ENCODE measurements at regions of chr1 and their contacts with region 1.

Region 1: DNA sequence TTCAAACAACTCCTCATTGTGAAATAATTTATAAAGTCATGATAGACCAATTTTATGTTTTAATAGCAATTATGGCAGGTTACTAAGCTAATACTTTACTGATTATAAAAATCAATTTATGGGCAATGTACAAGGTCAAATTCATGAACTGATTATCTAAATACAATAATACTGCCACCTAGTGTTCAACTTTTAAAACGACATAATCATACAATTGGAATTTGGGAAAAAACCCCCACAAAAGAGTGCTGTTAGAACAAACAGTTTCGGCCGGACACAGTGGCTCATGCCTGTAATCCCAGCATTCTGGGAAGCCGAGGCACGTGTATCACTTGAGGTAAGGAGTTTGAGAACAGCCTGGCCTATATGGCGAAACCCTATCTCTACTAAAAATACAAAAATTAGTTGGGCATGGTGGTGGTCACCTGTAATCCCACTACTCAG is 14.0 kb downstream of the GTF2B start:
- DNase-seq: peak in 1 of 2 experiments; percentile 5
- ATAC-seq: peak in 1 of 2 experiments; percentile 25; a peak in 1 of 6 replicates
- H3K4me3 ChIP-seq: no peak overlapping the region
- H3K27ac ChIP-seq: no peak overlapping the region
- H3K4me1 ChIP-seq: 0 out of 3 replicates have a peak, but pooled peaks cover 3% of the 10 kb centered on the region
- CTCF ChIP-seq: peak; percentile 55
- EP300 ChIP-seq: no peak
- POLR2A ChIP-seq: no peak
- RAD21 ChIP-seq: peak; percentile 43 to 58

Region 2: GRCh38 chr1:88891318-88891950 is 14.0 kb after region 1 on chr1 and contains the start of gene GTF2B:
- CTCF ChIA-PET with region 1: interaction called, 23 read pairs
- POLR2A ChIA-PET with region 1: interaction called, 4 read pairs
- DNase-seq: peak; percentile 35 to 95
- ATAC-seq: peak; percentile 89
- H3K4me3 ChIP-seq: peak within 1 kb of the TSS; percentile 97
- H3K27ac ChIP-seq: peak within 1 kb of the TSS; percentile 87 to 91
- H3K4me1 ChIP-seq: peaks cover 12% of the 10 kb centered on the region; the same call in 1 of the 3 replicates
- CTCF ChIP-seq: no peak
- EP300 ChIP-seq: no peak
- POLR2A ChIP-seq: peak; percentile 96
- RAD21 ChIP-seq: no peak
- polyA plus RNA-seq, gene GTF2B: 32.5 and 34.1 TPM in 2 replicates